ENCODE measurements at regions of chr15 and their contacts with region 1.

Region 1: GRCh38 chr15:70097337-70098169 is at the start of gene TLE3:
- DNase-seq: peak; percentile 99
- ATAC-seq: peak; percentile 67 to 72
- total RNA-seq, gene TLE3: 22.4 to 29.3 TPM

Region 2: DNA sequence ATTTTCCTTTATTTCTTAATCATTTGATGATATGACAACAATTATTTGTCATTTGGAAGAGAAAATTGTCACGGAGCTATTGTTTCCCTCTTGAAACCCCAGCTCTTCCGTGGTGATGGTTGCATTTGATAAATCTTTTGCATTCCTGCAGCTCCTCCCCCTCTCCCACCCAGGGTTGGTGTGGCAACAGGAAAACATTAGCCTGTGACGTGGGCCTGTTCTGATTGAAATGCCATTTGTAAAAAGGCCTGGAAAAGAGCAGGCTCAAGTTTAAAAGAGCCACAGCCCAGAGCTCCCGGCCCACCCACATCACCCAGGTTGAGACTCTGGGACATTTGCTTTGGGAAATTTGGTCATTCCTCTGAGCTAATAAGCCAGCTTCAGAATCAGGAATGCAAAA is 362.4 kb before region 1 on chr15:
- intact Hi-C with region 1: loop called in 1 of 2 experiments (anchors 10 kb)
- DNase-seq: no peak
- ATAC-seq: peak; percentile 26 to 40

Region 3: DNA sequence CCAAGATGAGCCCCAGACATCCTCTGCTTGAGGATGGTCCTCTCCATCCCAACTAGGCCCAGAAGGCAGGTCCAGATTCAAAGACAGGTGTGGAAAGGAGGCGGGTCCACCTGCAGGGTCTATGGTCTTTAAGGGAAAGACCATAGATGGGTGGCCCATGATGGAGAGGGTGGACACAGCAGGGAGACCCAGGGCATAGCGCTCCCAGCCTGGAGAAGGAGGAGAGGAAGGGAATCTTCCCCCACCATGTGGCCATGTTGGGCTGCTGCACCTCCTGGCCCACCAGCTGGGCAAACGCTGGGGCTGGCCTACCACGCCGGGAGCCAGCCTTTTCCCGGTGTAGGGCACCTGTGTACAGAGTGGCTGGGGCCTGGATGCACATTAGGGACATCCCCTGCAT is 265.3 kb after region 1 on chr15:
- intact Hi-C with region 1: loop called in 1 of 2 experiments (anchors 10 kb)
- DNase-seq: no peak
- ATAC-seq: peak; percentile 79 to 88

Region 4: GRCh38 chr15:70426105-70426821 is 328.7 kb after region 1 on chr15:
- intact Hi-C with region 1: no loop called
- DNase-seq: no peak
- ATAC-seq: no peak

Region 5: GRCh38 chr15:70474471-70475396 is 377.2 kb after region 1 on chr15:
- intact Hi-C with region 1: loop called in 1 of 2 experiments (anchors 5 kb)
- DNase-seq: peak; percentile 80
- ATAC-seq: peak; percentile 81 to 85